ENCODE measurements at regions of chr12 and their contacts with region 1.

Region 1: GRCh38 chr12:105420659-105421240 is 90.3 kb downstream of the C12orf75 start:
- DNase-seq: peak; percentile 73 to 82
- H3K4me3 ChIP-seq: no peak overlapping the region
- H3K4me3 Mint-ChIP-seq: no peak overlapping the region
- H3K27ac Mint-ChIP-seq: no peak overlapping the region
- H3K4me1 ChIP-seq: 0 out of 2 replicates have a peak, but pooled peaks cover under 1% of the 10 kb centered on the region
- H3K4me1 Mint-ChIP-seq: peaks cover 22% of the 10 kb centered on the region
- H3K27me3 ChIP-seq: no peaks in the 10 kb centered on the region
- H3K27me3 Mint-ChIP-seq: no peaks in the 10 kb centered on the region
- CTCF ChIP-seq: peak; percentile 80 to 90

Region 2: GRCh38 chr12:105357162-105357691 is 63.5 kb before region 1 on chr12:
- CTCF ChIA-PET with region 1: no interaction called
- POLR2A ChIA-PET with region 1: no interaction called
- intact Hi-C with region 1: no loop called
- DNase-seq: peak in 1 of 2 experiments; percentile 17
- H3K4me3 ChIP-seq: no peak overlapping the region
- H3K4me3 Mint-ChIP-seq: peak overlapping the region; percentile 27
- H3K27ac Mint-ChIP-seq: peak overlapping the region; percentile 83
- H3K4me1 ChIP-seq: peaks cover 63% of the 10 kb centered on the region
- H3K4me1 Mint-ChIP-seq: peaks cover 37% of the 10 kb centered on the region
- H3K27me3 ChIP-seq: no peaks in the 10 kb centered on the region
- H3K27me3 Mint-ChIP-seq: no peaks in the 10 kb centered on the region
- CTCF ChIP-seq: no peak

Region 3: DNA sequence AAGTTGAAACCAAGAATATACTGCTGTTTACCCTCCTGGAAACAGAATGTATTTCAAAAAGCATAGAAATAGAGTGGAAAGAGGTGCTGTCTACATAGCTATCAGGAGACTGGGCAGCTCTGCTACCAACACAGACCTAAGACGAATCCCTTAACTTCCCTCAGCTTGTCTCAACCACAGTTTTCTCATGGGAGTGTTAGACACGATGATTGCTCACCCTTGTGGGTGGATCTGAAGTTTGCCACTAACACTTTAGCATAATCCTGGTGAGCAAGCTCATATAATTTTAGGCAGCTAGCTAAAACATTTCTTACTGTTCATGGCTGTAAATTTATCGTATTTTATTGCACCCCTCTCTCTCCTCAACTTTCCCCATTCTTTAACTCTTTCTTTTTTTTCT is 51.7 kb before region 1 on chr12:
- CTCF ChIA-PET with region 1: no interaction called
- POLR2A ChIA-PET with region 1: no interaction called
- intact Hi-C with region 1: no loop called
- DNase-seq: no peak
- H3K4me3 ChIP-seq: no peak overlapping the region
- H3K4me3 Mint-ChIP-seq: no peak overlapping the region
- H3K27ac Mint-ChIP-seq: no peak overlapping the region
- H3K4me1 ChIP-seq: no peaks in the 10 kb centered on the region
- H3K4me1 Mint-ChIP-seq: no peaks in the 10 kb centered on the region
- H3K27me3 ChIP-seq: no peaks in the 10 kb centered on the region
- H3K27me3 Mint-ChIP-seq: no peaks in the 10 kb centered on the region
- CTCF ChIP-seq: no peak

Region 4: DNA sequence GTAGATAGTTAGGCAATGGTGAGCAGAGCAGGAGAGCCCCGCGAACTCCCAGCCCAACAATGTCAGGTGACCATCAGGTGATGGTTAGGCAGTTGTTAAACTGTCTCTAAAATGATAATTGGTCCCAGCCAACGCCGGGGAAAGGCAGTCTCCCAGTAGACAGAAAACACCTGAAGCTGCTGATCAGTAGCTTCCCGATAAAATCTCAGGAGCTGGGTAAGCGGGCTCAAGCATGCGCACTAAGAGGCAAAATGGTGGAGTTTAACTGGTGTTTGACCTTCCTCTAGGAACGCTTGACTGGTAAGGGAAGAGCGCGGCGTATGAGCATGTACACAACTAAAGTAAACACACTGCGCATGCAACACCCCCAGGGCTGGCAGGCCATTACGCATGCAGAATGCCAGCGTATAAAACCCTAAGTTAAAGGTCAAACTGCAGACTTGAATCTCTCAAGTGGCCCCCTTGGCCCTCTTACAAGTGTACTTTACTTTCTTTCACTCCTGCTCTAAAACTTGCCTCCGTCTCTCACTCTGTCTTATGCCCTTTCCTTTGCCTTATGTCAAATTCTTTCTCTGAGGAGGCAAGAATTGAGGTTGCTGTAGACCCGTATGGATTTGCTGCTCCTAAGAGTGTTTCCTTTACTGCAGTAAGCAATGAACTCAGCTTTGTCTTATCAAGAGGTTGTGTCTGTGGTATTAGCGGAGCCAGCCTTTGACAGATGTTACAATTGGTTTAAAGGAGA is 23.3 kb after region 1 on chr12:
- CTCF ChIA-PET with region 1: no interaction called
- POLR2A ChIA-PET with region 1: no interaction called
- intact Hi-C with region 1: no loop called
- DNase-seq: no peak
- H3K4me3 ChIP-seq: no peak overlapping the region
- H3K4me3 Mint-ChIP-seq: peak overlapping the region; percentile 21
- H3K27ac Mint-ChIP-seq: peak overlapping the region; percentile 88
- H3K4me1 ChIP-seq: peaks cover 45% of the 10 kb centered on the region
- H3K4me1 Mint-ChIP-seq: peaks cover 15% of the 10 kb centered on the region
- H3K27me3 ChIP-seq: no peaks in the 10 kb centered on the region
- H3K27me3 Mint-ChIP-seq: no peaks in the 10 kb centered on the region
- CTCF ChIP-seq: no peak

Region 5: DNA sequence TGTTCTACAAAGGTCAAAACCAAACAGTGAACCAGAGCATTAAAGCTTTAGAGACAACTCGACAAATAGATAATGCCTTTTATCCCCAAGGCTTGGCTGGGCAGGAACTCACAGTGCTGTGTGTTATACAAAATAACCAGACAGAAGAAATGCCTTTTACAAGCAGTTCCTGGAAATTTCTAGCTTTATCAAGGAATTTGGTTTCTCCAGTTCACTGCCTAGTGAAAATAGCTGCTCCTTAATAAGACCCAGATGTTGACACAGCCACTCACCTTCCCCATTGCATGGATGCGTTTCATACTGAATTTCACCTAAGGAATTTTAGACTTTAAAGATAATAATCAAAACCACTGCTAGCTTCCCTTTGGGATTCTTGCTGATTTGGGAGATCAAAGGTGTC is 71.8 kb after region 1 on chr12:
- CTCF ChIA-PET with region 1: no interaction called
- POLR2A ChIA-PET with region 1: no interaction called
- intact Hi-C with region 1: loop called (anchors 2 kb)
- DNase-seq: peak; percentile 72 to 74
- H3K4me3 ChIP-seq: no peak overlapping the region
- H3K4me3 Mint-ChIP-seq: peak overlapping the region; percentile 54
- H3K27ac Mint-ChIP-seq: peak overlapping the region; percentile 88
- H3K4me1 ChIP-seq: peaks cover 28% of the 10 kb centered on the region
- H3K4me1 Mint-ChIP-seq: peaks cover 26% of the 10 kb centered on the region
- H3K27me3 ChIP-seq: no peaks in the 10 kb centered on the region
- H3K27me3 Mint-ChIP-seq: no peaks in the 10 kb centered on the region
- CTCF ChIP-seq: no peak

Region 6: DNA sequence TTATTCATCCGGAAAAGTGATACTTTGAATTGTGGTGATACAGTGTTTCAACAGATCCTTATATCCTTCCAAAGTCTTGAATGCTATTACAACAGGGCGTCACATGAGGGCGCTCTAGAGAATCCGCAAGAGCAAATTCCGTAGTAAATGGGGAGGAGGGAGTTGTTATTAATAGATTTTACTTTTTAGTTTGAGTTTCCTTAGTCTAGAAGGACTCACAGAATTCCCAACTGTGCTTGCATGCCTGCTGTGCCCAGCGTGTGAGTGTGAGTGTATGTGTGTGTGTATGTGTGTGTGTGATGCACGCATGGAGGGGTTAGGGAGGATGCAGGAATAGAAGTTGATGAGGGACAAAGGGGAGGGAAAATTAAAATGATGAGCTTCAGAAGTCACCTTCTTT is 285.0 kb after region 1 on chr12:
- CTCF ChIA-PET with region 1: interaction called, 7 read pairs
- POLR2A ChIA-PET with region 1: no interaction called
- intact Hi-C with region 1: loop called (anchors 2 kb)
- DNase-seq: peak in 1 of 2 experiments; percentile 40
- H3K4me3 ChIP-seq: no peak overlapping the region
- H3K4me3 Mint-ChIP-seq: no peak overlapping the region
- H3K27ac Mint-ChIP-seq: no peak overlapping the region
- H3K4me1 ChIP-seq: no peaks in the 10 kb centered on the region
- H3K4me1 Mint-ChIP-seq: no peaks in the 10 kb centered on the region
- H3K27me3 ChIP-seq: no peaks in the 10 kb centered on the region
- H3K27me3 Mint-ChIP-seq: no peaks in the 10 kb centered on the region
- CTCF ChIP-seq: peak; percentile 52 to 54

Region 7: GRCh38 chr12:105831372-105831771 is 410.6 kb after region 1 on chr12:
- CTCF ChIA-PET with region 1: no interaction called
- POLR2A ChIA-PET with region 1: no interaction called
- intact Hi-C with region 1: loop called (anchors 2 kb)
- DNase-seq: no peak
- H3K4me3 ChIP-seq: no peak overlapping the region
- H3K4me3 Mint-ChIP-seq: no peak overlapping the region
- H3K27ac Mint-ChIP-seq: no peak overlapping the region
- H3K4me1 ChIP-seq: no peaks in the 10 kb centered on the region
- H3K4me1 Mint-ChIP-seq: no peaks in the 10 kb centered on the region
- H3K27me3 ChIP-seq: no peaks in the 10 kb centered on the region
- H3K27me3 Mint-ChIP-seq: no peaks in the 10 kb centered on the region
- CTCF ChIP-seq: peak in 1 of 2 experiments; percentile 9

Region 8: GRCh38 chr12:106149096-106149784 is 728.5 kb after region 1 on chr12:
- CTCF ChIA-PET with region 1: interaction called, 11 read pairs
- POLR2A ChIA-PET with region 1: no interaction called
- intact Hi-C with region 1: loop called (anchors 1 kb)
- DNase-seq: peak; percentile 57
- H3K4me3 ChIP-seq: no peak overlapping the region
- H3K4me3 Mint-ChIP-seq: no peak overlapping the region
- H3K27ac Mint-ChIP-seq: no peak overlapping the region
- H3K4me1 ChIP-seq: no peaks in the 10 kb centered on the region
- H3K4me1 Mint-ChIP-seq: peaks cover 9% of the 10 kb centered on the region
- H3K27me3 ChIP-seq: no peaks in the 10 kb centered on the region
- H3K27me3 Mint-ChIP-seq: no peaks in the 10 kb centered on the region
- CTCF ChIP-seq: peak; percentile 45 to 79

Region 9: DNA sequence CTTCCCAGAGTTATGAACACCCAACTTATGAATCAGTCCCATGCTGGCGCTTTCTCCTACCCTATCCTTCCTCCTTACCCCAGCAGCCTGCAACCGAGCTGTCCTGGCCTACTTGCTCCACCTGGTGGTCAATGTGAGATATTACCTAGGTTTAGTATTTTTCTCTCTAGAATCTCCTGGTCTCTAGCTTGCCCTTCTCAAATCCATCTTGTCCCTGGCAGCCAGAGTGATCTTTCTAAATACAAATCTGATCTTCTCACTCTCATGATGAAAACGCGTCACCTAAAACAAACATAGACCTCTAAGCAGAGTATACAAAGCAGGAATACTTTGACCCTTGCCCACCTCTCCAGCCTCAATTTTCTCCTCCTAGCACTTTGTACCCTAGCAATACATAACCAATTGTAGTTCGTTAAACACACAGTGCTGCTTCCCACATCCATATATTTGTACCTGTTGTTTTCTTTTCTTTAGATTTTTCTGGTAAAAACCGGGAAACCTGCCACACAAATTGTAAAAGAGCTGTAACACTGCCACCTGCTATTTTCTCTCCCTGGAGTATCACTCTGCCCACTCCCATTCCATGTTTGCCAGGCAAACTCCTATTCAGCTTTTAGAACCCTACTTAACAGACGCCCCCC is 861.8 kb after region 1 on chr12:
- CTCF ChIA-PET with region 1: interaction called, 5 read pairs
- POLR2A ChIA-PET with region 1: no interaction called
- intact Hi-C with region 1: loop called (anchors 1 kb)
- DNase-seq: peak; percentile 70 to 73
- H3K4me3 ChIP-seq: no peak overlapping the region
- H3K4me3 Mint-ChIP-seq: no peak overlapping the region
- H3K27ac Mint-ChIP-seq: peak overlapping the region; percentile 35
- H3K4me1 ChIP-seq: peaks cover 34% of the 10 kb centered on the region
- H3K4me1 Mint-ChIP-seq: peaks cover 39% of the 10 kb centered on the region
- H3K27me3 ChIP-seq: no peaks in the 10 kb centered on the region
- H3K27me3 Mint-ChIP-seq: no peaks in the 10 kb centered on the region
- CTCF ChIP-seq: peak; percentile 68 to 88